Activated T-helper 2 cell treated with anti-CD3 and anti-CD28 coated beads, Interferon-gamma antibody, Interleukin-2, Interleukin-4, amounts not matched to agents 10 μg/mL and 5 μg/mL and 100 μg/mL, durations not matched to agents 14 hours and 24 hours and 36 hours (primary cell): ENCODE measurements at regions of chr4 and their contacts with region 1.

Region 1: GRCh38 chr4:38062088-38062893 is 102.1 kb downstream of the PTTG2 start:
- DNase-seq: peak; percentile 36
- H3K4me3 Mint-ChIP-seq: peak overlapping the region; percentile 67
- H3K27ac Mint-ChIP-seq: peak overlapping the region; percentile 61
- H3K4me1 Mint-ChIP-seq: peaks cover 16% of the 10 kb centered on the region
- H3K27me3 Mint-ChIP-seq: no peaks in the 10 kb centered on the region

Region 2: DNA sequence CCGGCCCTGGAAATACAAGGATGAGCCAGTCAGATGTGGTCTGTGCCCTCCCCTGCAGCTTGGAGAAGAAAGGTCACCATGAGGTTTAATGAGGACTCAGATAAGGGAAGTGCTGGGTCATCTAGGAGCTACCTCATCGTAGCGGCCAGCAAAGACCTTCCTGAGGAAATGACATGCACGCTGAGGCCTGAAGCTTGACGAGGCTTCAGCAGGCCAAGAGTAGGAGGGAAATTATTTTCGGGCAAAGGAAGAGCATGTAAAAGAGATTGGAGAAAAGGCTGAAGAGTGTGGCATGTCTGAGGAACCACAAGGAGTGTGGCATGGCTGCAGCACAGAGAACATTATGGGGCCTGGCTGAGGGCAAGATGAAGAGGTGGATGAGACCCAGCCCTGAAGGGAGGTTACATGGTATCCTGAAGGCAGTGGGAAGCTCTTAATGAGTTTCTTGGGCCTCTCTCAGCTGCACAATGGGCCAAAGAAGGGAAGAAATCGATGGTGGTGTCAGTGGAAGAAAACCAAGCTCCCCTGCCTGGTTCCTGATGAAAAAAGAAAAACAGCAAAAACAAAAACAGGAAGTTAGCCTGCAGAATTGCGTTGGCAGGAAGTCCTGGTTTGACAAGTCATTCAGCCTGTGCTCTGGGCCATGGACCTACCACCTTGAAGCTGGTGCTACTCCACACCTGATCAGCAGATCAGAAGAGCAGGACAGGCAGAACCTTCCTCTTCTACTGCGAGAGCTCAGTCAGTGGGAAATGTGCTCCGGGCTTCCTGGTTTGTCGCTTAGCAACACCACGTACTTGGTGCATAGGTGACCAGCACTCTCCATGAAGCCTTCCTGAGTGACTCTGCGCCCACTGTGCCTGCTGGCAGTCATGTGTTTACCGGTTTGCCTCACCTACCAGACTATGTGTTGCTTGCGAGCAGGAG is 467.2 kb after region 1 on chr4:
- intact Hi-C with region 1: loop called (anchors 10 kb)
- DNase-seq: peak; percentile 12
- H3K4me3 Mint-ChIP-seq: no peak overlapping the region
- H3K27ac Mint-ChIP-seq: peak overlapping the region; percentile 82
- H3K4me1 Mint-ChIP-seq: peaks cover 17% of the 10 kb centered on the region
- H3K27me3 Mint-ChIP-seq: peaks cover 10% of the 10 kb centered on the region

Region 3: DNA sequence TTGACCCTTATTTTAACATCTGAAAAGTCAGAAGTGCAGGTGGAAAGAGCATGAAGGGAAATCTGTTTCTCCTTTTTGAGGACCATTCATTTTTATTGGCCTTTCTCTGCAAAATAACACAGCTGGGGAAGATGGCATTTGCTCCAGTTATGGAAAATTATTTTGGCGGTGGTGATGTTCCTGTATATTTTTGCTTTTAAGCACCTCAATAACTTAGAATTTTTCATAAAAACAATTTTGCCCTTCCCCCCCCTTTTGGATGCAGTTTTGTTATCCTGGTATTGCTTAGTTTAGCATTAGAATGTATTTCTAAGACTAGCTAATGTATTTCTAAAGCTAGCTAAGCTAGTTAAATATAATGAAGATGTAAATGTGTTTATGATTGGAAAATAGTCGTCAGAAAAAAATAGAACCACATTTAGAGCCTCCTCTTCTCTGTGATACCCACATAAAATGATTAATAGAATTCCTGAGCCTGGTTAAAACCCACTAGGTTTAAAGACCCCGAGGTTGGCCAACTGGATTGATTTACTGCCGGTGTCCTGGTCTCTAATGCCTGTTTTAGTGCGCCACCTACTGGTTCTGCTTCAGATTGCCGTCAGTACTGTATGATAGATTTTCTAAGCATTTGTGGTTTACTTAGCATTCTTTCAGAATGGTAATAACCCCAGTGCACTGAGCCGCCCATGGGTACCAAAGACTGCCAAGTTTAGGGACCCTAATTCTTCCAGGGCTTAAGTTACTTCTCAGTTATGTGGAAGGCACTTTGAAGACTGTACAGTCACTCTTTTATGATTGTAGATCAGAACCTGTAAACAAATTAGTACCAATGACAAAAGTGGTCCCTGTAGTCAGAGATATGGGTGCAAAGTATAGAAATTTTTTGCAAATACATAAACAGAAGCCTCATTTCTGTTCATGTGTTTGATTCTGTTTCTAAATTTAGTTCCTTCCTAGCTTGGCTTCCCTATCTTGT is 613.1 kb after region 1 on chr4:
- intact Hi-C with region 1: loop called (anchors 1 kb)
- DNase-seq: peak; percentile 68
- H3K4me3 Mint-ChIP-seq: no peak overlapping the region
- H3K27ac Mint-ChIP-seq: no peak overlapping the region
- H3K4me1 Mint-ChIP-seq: peaks cover 18% of the 10 kb centered on the region
- H3K27me3 Mint-ChIP-seq: peaks cover 30% of the 10 kb centered on the region

Region 4: GRCh38 chr4:38730830-38731646 is 668.7 kb after region 1 on chr4:
- intact Hi-C with region 1: loop called (anchors 1 kb)
- DNase-seq: peak; percentile 64
- H3K4me3 Mint-ChIP-seq: no peak overlapping the region
- H3K27ac Mint-ChIP-seq: no peak overlapping the region
- H3K4me1 Mint-ChIP-seq: peaks cover 10% of the 10 kb centered on the region
- H3K27me3 Mint-ChIP-seq: peaks cover 21% of the 10 kb centered on the region